Natural killer cell (primary cell): ENCODE measurements at regions of chr6 and their contacts with region 1.

Region 1: DNA sequence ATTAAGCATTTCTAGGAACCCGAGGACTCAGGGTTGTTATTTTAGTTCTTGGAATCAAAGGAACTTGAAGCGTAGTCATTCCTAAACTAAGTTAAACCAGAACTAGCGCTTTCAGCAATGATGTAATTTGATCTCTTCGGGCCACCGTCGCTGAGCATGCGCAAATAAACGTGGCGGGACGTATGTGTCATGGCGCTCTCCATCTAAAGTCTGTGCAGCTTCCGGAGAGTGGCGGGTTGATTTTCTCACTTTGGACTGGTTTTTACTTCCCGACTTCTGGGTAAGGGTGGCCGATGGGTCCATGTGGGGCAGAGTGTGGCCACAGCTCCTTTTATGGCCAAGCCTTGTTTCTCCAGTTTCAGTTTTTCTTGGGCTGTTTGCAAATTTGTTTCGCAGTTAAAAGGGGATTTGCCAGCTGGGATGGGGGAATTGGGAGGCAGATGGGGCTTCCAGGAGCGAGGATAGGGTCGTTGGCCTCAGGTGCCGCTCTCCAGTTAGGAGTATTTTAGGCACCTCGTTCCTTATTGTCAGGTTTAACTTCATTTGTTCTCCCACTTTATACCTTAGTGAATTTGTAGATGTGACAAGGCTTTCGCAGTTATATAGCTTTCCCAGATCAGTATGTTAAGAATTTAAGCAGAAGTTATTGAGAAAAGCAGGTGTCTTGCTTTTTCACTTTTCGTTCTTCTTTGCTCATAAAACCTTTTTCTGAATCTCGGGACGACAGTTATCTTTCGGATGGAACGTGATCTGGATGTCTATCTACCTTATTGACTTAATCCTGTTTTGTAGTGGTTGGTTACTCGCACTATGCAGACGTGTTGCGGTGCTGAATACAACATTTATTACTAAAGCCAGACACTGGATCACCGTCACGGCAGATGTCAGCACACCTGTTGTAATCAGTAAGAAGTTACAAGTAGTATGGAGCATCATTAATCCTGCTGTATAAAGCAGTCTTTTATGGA is at the start of gene CDKAL1:
- DNase-seq: peak; percentile 87 to 95
- ATAC-seq: peak; percentile 92 to 96 (median 95)
- H3K4me3 ChIP-seq: peak within 1 kb of the TSS; percentile 89
- H3K4me3 Mint-ChIP-seq: peak within 1 kb of the TSS; percentile 97
- H3K27ac ChIP-seq: peak within 1 kb of the TSS; percentile 86
- H3K27ac Mint-ChIP-seq: peak within 1 kb of the TSS; percentile 95
- H3K4me1 ChIP-seq: peaks cover 9% of the 10 kb centered on the region
- H3K4me1 Mint-ChIP-seq: peaks cover 29 to 45% of the 10 kb centered on the region in 2 donors
- H3K27me3 ChIP-seq: no peaks in the 10 kb centered on the region
- H3K27me3 Mint-ChIP-seq: peaks cover 9 to 15% of the 10 kb centered on the region in 2 donors
- CTCF ChIP-seq: no peak
- total RNA-seq, gene CDKAL1: 26.0 to 32.8 (median 28.9) TPM

Region 2: GRCh38 chr6:20092071-20092566 is 442.5 kb before region 1 on chr6:
- intact Hi-C with region 1: loop called (anchors 10 kb)
- DNase-seq: peak in 1 of 2 donors; percentile 57
- ATAC-seq: peak in 2 of 3 donors; percentile 47 to 49
- H3K4me3 ChIP-seq: no peak overlapping the region
- H3K4me3 Mint-ChIP-seq: no peak overlapping the region
- H3K27ac ChIP-seq: no peak overlapping the region
- H3K27ac Mint-ChIP-seq: no peak overlapping the region
- H3K4me1 ChIP-seq: no peaks in the 10 kb centered on the region
- H3K4me1 Mint-ChIP-seq: no peaks in the 10 kb centered on the region
- H3K27me3 ChIP-seq: no peaks in the 10 kb centered on the region
- H3K27me3 Mint-ChIP-seq: peaks cover 0 to 8% of the 10 kb centered on the region in 2 donors
- CTCF ChIP-seq: peak; percentile 71

Region 3: GRCh38 chr6:20291764-20292580 is 242.6 kb before region 1 on chr6:
- intact Hi-C with region 1: loop called (anchors 1 kb)
- DNase-seq: peak; percentile 59 to 89
- ATAC-seq: peak; percentile 82 to 98 (median 97)
- H3K4me3 ChIP-seq: no peak overlapping the region
- H3K4me3 Mint-ChIP-seq: no peak overlapping the region
- H3K27ac ChIP-seq: no peak overlapping the region
- H3K27ac Mint-ChIP-seq: no peak overlapping the region
- H3K4me1 ChIP-seq: no peaks in the 10 kb centered on the region
- H3K4me1 Mint-ChIP-seq: peaks cover 0 to 6% of the 10 kb centered on the region in 2 donors
- H3K27me3 ChIP-seq: no peaks in the 10 kb centered on the region
- H3K27me3 Mint-ChIP-seq: peaks cover 0 to under 1% of the 10 kb centered on the region in 2 donors
- CTCF ChIP-seq: peak; percentile 97

Region 4: DNA sequence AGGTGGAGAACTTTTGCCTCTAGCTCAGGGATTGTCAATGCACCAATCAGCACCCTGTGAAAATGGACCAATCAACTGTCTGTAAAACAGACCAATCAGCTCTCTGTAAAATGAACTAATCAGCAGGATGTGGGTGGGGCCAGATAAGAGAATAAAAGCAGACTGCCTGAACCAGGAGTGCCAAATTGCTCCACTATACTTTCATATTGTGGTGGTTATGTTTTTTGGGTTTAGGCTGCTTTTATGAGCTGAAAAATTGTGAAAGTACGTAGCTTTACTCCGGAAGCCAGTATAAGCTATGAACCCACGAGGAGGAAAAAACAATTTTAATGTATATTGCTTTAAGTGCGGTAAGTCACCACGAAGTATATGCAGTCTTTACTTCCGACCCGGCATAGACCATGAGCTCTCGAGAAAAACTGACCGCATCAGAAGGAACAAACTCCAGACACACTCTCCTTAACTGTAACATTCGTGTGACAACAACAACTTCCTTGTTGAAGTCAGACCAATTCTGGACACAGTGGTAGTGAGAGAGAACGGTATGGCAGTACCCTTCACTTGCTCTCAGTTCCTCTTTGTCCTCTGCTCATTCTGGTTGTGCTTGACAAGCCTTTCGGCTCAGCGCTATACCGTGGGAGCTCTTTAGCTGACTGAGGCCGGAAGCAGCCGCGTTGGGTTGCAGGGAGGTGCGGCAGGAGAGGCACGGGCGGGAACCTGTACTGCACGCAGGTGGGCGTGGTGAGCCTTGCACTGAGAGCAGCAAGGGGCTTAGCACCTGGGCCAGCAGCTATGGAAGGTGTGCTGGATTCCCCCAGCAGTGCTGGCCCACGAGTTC is 214.8 kb before region 1 on chr6:
- intact Hi-C with region 1: loop called (anchors 1 kb)
- DNase-seq: peak; percentile 58 to 91
- ATAC-seq: peak; percentile 79 to 83 (median 80)
- H3K4me3 ChIP-seq: peak overlapping the region; percentile 41
- H3K4me3 Mint-ChIP-seq: peak overlapping the region; percentile 92
- H3K27ac ChIP-seq: peak overlapping the region; percentile 71
- H3K27ac Mint-ChIP-seq: peak overlapping the region; percentile 94 to 98
- H3K4me1 ChIP-seq: peaks cover 11% of the 10 kb centered on the region
- H3K4me1 Mint-ChIP-seq: peaks cover 17 to 22% of the 10 kb centered on the region in 2 donors
- H3K27me3 ChIP-seq: no peaks in the 10 kb centered on the region
- H3K27me3 Mint-ChIP-seq: no peaks in the 10 kb centered on the region
- CTCF ChIP-seq: no peak

Region 5: DNA sequence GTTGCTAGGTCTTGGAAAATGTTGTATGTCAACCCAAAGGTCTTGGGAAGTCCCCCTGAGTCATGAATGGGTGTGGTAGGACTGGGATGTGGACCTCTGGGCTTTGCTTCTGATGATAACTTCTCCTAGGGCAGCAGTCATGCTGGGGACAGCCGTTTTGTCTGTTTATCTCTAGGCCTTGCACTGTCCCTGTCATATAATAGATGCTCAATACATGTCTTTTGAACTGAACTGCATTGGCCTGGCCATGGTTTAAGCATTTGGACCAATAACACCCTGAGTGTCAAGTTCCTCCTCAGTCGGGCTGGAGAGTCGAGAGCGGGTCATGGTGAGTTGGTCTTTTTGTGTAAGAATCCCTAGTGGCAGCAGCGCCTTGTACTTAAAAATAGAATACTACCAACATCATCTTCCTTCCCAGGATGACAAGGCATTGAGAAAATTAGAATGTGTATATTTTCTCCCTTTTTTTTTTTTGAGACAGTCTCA is 89.8 kb before region 1 on chr6:
- intact Hi-C with region 1: no loop called
- DNase-seq: peak in 1 of 2 donors; percentile 9
- ATAC-seq: peak in 2 of 3 donors; percentile 18 to 43
- H3K4me3 ChIP-seq: no peak overlapping the region
- H3K4me3 Mint-ChIP-seq: no peak overlapping the region
- H3K27ac ChIP-seq: no peak overlapping the region
- H3K27ac Mint-ChIP-seq: peak overlapping the region in 1 of 2 donors; percentile 43
- H3K4me1 ChIP-seq: no peaks in the 10 kb centered on the region
- H3K4me1 Mint-ChIP-seq: peaks cover 28 to 33% of the 10 kb centered on the region in 2 donors
- H3K27me3 ChIP-seq: no peaks in the 10 kb centered on the region
- H3K27me3 Mint-ChIP-seq: no peaks in the 10 kb centered on the region
- CTCF ChIP-seq: no peak

Region 6: DNA sequence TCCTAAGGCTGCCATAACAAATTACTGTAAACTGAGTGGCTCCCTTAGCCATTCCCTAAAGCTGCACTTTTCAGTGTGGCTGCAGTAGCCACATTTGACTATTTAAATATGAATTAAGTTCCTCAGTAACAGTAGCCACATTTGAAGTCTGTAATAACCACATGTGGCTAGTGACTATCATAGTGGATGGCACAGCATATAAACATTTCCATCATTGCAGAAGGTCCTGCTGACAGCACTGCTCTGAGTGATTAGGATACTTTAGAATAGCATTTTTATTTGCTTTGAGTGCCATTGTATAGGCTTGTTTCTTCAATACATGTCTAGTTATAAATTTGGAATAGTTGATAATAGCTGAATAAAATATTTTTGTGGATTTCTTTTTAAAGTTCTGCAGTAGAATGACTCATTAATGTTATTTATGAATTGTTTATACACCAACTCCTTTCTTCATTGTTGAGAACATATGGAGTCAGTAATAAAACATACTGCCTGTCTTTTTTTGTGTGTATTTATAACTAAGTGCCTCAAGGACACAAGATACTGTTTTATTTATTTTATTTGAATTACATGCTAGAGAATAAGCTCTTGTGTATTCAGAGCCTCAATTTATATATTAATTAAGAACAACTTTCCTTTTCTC is 216.8 kb after region 1 on chr6:
- intact Hi-C with region 1: no loop called
- DNase-seq: no peak
- ATAC-seq: no peak
- H3K4me3 ChIP-seq: no peak overlapping the region
- H3K4me3 Mint-ChIP-seq: no peak overlapping the region
- H3K27ac ChIP-seq: no peak overlapping the region
- H3K27ac Mint-ChIP-seq: no peak overlapping the region
- H3K4me1 ChIP-seq: no peaks in the 10 kb centered on the region
- H3K4me1 Mint-ChIP-seq: peaks cover 17 to 30% of the 10 kb centered on the region in 2 donors
- H3K27me3 ChIP-seq: no peaks in the 10 kb centered on the region
- H3K27me3 Mint-ChIP-seq: no peaks in the 10 kb centered on the region
- CTCF ChIP-seq: no peak